A549 (cell line): ENCODE measurements at regions of chr6 and their contacts with region 1.

Region 1: GRCh38 chr6:27772261-27773001 is 139.8 kb downstream of the OR2B2 start:
- DNase-seq: peak; percentile 58 to 88
- ATAC-seq: peak; percentile 95 to 96
- H3K4me3 ChIP-seq: peak overlapping the region; percentile 26; the same call in 2 of the 3 replicates
- H3K27ac ChIP-seq: peak overlapping the region; percentile 19 to 73; a peak in 3 of 6 replicates
- H3K4me1 ChIP-seq: peaks cover 13% of the 10 kb centered on the region; the same call in 2 of the 3 replicates
- CTCF ChIP-seq: peak; percentile 79
- EP300 ChIP-seq: no peak
- POLR2A ChIP-seq: no peak
- RAD21 ChIP-seq: peak; percentile 48 to 63

Region 2: DNA sequence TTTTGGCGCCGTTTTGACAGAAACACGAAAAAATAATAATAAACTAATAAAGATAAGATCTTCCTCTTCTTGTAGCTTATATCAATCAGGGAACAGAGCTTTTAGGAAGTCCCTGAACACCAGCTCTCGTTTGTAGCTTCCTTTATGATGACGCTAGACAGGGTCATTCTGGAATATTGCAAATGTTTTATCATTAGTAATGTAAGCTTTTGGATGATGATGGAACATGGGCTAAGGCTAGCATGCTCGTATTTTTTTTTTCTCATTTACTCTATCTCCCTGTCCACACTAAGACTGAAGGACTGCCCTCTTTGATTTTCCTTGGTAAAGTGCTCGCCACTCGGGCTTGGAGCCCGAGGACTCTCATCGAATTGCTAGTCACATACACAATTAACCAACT is 438.3 kb before region 1 on chr6:
- CTCF ChIA-PET with region 1: no interaction called
- POLR2A ChIA-PET with region 1: no interaction called
- DNase-seq: no peak
- ATAC-seq: no peak; a peak in 1 of 6 replicates
- H3K4me3 ChIP-seq: 0 out of 3 replicates have a peak overlapping the region, but pooled peaks have one; percentile 44
- H3K27ac ChIP-seq: no peak overlapping the region
- H3K4me1 ChIP-seq: no peaks in the 10 kb centered on the region
- CTCF ChIP-seq: no peak
- EP300 ChIP-seq: no peak
- POLR2A ChIP-seq: no peak
- RAD21 ChIP-seq: no peak

Region 3: DNA sequence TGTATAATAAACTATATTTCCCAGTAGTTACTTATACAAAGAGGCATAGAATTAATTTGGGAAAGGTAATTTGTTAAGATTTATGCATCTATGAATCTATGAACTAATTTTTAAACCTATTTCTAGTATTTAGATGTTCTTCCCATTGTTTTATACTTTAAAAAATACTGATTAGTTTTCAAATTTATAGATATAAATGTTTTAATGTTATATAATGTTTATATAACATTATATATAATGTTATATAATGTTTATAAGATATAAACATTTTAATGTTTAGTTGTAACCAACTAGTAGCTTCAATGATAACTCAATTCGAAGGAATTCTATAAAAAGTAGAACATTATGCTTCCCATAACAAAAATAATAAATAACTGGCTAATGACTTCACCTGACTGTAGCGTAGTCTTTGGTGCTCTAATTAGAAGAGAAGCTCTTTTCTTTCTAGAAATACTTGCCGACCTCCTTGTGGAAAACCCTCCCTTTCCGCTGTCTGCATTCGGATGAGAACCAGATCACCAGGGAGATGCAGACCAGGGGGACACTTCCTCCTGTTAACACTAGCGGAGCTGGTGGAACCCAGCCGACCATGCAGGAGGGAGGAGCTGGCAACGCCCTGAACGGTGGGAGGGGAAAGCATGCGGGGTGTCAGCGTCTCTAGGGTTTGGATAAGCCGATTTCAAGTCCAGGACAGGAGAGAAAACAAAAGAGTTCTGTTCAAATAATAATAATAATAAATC is 18.6 kb before region 1 on chr6:
- CTCF ChIA-PET with region 1: interaction called, 46 read pairs
- POLR2A ChIA-PET with region 1: no interaction called
- DNase-seq: peak; percentile 70 to 91
- ATAC-seq: peak; percentile 89 to 92
- H3K4me3 ChIP-seq: peak overlapping the region; percentile 64
- H3K27ac ChIP-seq: peak overlapping the region; percentile 33 to 40; a peak in 2 of 6 replicates
- H3K4me1 ChIP-seq: peaks cover 5% of the 10 kb centered on the region; the same call in 1 of the 3 replicates
- CTCF ChIP-seq: no peak
- EP300 ChIP-seq: no peak
- POLR2A ChIP-seq: no peak
- RAD21 ChIP-seq: no peak

Region 4: DNA sequence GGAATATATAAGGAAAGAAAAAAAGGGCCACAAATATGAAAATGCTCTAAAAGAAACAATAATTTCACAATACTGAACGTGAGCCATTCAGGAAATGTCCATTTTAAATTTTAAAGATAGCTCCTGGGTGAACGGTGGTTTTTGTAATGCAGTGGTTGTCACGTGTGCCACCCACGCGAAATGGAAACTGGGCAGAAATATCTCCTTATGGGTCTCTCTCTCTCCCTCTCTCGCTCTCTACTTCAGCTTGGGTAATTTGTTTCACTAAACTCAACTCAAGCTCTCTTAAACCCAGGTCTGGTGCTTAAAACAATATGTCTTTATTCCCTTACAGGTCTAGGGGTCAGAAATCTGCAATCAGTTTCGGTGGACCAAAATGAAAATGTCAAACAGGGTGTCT is 11.0 kb before region 1 on chr6:
- CTCF ChIA-PET with region 1: interaction called, 45 read pairs
- POLR2A ChIA-PET with region 1: interaction called, 5 read pairs
- DNase-seq: no peak
- ATAC-seq: no peak
- H3K4me3 ChIP-seq: no peak overlapping the region
- H3K27ac ChIP-seq: no peak overlapping the region
- H3K4me1 ChIP-seq: no peaks in the 10 kb centered on the region
- CTCF ChIP-seq: no peak
- EP300 ChIP-seq: no peak
- POLR2A ChIP-seq: no peak
- RAD21 ChIP-seq: no peak

Region 5: DNA sequence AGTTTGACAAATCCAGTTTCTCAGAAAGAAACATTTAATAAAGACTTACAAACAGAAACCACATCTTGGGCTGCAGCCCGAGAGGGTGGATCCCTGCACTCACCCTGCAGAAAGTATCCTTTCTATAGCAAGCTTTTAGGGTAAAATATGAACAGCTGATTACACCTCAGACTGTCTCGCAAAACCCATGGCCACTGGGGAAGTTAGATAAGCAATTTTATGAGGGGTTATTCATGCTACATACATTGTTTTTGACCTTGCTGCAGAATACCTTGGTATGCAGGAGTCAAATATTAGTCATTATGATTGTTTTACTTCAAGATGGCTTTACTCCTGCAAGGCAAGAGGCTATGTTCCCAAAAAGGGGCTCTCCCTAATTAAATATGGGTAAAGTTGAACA is 12.9 kb after region 1 on chr6:
- CTCF ChIA-PET with region 1: interaction called, 14 read pairs
- POLR2A ChIA-PET with region 1: no interaction called
- DNase-seq: no peak
- ATAC-seq: no peak
- H3K4me3 ChIP-seq: no peak overlapping the region
- H3K27ac ChIP-seq: no peak overlapping the region
- H3K4me1 ChIP-seq: no peaks in the 10 kb centered on the region
- CTCF ChIP-seq: no peak
- EP300 ChIP-seq: no peak
- POLR2A ChIP-seq: no peak
- RAD21 ChIP-seq: no peak

Region 6: GRCh38 chr6:27795697-27796494 is 23.5 kb after region 1 on chr6:
- CTCF ChIA-PET with region 1: interaction called, 45 read pairs
- POLR2A ChIA-PET with region 1: no interaction called
- DNase-seq: peak; percentile 36 to 86
- ATAC-seq: peak; percentile 40 to 55; a peak in 4 of 6 replicates
- H3K4me3 ChIP-seq: no peak overlapping the region
- H3K27ac ChIP-seq: no peak overlapping the region
- H3K4me1 ChIP-seq: peaks cover 10% of the 10 kb centered on the region
- CTCF ChIP-seq: peak; percentile 70
- EP300 ChIP-seq: no peak
- POLR2A ChIP-seq: no peak
- RAD21 ChIP-seq: peak; percentile 66 to 69